GM10248 (cell line): ENCODE measurements at regions of chr16 and their contacts with region 1.

Region 1: GRCh38 chr16:27639561-27640276 is 89.8 kb downstream of the KATNIP start:
- DNase-seq: peak; percentile 84
- CTCF ChIP-seq: peak; percentile 76

Region 2: DNA sequence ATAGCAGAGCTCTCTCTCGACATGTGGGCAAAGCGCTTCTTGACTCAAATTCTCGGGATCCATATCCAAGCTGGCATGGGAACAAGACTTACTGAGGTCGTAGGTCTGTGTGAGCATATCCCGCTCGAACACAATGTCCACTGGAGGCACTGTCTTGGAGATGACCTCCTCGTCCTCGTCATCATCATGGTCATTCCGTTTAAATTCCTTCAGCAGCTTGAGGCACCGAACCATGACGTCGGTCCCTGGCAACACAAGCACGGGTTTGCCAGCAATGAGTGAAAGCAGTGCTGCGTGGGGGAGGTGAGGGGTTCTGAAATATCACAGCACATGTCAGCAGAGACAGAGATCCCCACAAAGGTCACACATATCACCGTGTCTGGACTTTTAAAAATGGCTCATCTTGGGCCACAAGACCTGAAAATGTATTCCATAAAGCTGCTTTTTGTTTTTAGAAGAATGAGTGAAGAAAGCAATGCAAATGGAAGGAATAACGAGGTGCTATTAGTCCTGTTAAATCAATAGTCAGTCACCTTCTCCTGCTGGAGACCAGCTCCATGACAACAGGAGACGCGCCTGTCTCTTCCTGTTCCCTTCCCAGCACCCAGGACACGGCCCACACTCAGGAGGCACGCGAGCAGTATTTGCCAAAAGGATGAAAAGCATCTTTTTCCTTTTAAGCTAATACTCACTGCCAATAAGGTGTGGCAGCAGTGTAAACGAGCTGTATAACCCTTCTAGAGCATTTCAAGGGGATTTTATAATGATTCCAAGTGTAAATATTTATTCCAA is 127.9 kb before region 1 on chr16:
- CTCF ChIA-PET with region 1: no interaction called
- POLR2A ChIA-PET with region 1: no interaction called
- DNase-seq: no peak
- CTCF ChIP-seq: no peak

Region 3: GRCh38 chr16:27625050-27625697 is 14.5 kb before region 1 on chr16:
- CTCF ChIA-PET with region 1: interaction called, 57 read pairs
- POLR2A ChIA-PET with region 1: no interaction called
- DNase-seq: no peak
- CTCF ChIP-seq: no peak

Region 4: DNA sequence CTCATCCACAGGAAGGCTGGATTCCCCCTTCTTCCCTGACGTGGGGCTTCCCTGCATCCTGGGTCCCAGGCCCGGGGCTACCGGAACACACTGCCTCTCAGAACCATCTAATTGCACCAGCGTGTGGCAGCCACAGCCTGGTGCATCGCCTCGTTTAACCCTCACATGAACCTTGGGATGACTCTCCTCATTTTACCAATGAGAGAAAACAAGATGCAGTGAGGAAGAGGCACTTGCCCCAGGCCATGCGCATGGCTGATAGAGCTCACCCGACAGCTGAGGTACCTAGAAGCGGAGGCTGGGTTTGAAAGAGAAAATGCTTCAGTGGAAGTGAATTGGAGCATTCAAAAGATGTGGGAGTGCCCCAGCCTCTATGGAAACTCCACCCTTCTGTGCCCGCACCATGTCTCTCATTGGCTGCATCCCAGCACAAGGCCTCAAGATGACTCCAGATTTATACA is 72.6 kb after region 1 on chr16:
- CTCF ChIA-PET with region 1: no interaction called
- POLR2A ChIA-PET with region 1: no interaction called
- DNase-seq: no peak
- CTCF ChIP-seq: no peak

Region 5: DNA sequence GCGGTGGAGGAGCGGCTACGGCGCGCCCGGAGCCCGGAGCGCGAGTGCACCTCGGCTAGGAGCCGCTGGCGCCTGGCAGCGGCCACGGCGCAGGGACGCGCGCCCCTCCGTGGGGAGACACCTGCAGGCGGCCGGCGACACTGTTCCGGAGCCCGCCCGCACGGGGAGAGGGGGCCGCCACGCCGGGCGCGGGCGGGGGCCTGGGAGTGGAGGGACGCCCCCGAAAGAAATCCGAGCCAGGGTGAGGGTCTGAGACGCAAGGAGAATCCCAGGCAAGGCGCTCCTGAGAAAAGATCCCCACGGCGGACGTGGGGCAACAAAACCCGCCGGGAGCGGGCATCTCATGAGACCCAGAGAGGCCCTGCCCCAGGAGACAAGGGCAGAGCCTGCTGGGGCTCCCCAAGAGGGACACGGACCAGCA is 423.9 kb after region 1 on chr16 and contains the start of gene GSG1L:
- CTCF ChIA-PET with region 1: interaction called, 32 read pairs
- POLR2A ChIA-PET with region 1: no interaction called
- DNase-seq: no peak
- CTCF ChIP-seq: peak; percentile 11